Activated CD4-positive, alpha-beta T cell treated with anti-CD3 and anti-CD28 coated beads for 36 hours (primary cell): ENCODE measurements at regions of chr2 and their contacts with region 1.

Region 1: GRCh38 chr2:8408560-8409460 is 273.0 kb upstream of the ID2 start:
- DNase-seq: peak; percentile 88
- ATAC-seq: peak; percentile 97
- H3K4me3 Mint-ChIP-seq: peak overlapping the region; percentile 28
- H3K27ac Mint-ChIP-seq: peak overlapping the region; percentile 84
- H3K4me1 Mint-ChIP-seq: peaks cover 33% of the 10 kb centered on the region
- H3K27me3 Mint-ChIP-seq: peaks cover 10% of the 10 kb centered on the region

Region 2: GRCh38 chr2:7377916-7378569 is 1030.8 kb before region 1 on chr2:
- CTCF ChIA-PET with region 1: no interaction called
- POLR2A ChIA-PET with region 1: no interaction called
- intact Hi-C with region 1: no loop called
- DNase-seq: no peak
- ATAC-seq: no peak
- H3K4me3 Mint-ChIP-seq: no peak overlapping the region
- H3K27ac Mint-ChIP-seq: no peak overlapping the region
- H3K4me1 Mint-ChIP-seq: no peaks in the 10 kb centered on the region
- H3K27me3 Mint-ChIP-seq: peaks cover 8% of the 10 kb centered on the region

Region 3: GRCh38 chr2:7467782-7468447 is 940.9 kb before region 1 on chr2:
- CTCF ChIA-PET with region 1: no interaction called
- POLR2A ChIA-PET with region 1: no interaction called
- intact Hi-C with region 1: loop called in 1 of 2 experiments (anchors 1 kb)
- DNase-seq: peak; percentile 69
- ATAC-seq: peak; percentile 96
- H3K4me3 Mint-ChIP-seq: peak overlapping the region; percentile 15
- H3K27ac Mint-ChIP-seq: peak overlapping the region; percentile 84
- H3K4me1 Mint-ChIP-seq: peaks cover 45% of the 10 kb centered on the region
- H3K27me3 Mint-ChIP-seq: peaks cover 2% of the 10 kb centered on the region

Region 4: GRCh38 chr2:7845332-7845731 is 563.5 kb before region 1 on chr2:
- CTCF ChIA-PET with region 1: no interaction called
- POLR2A ChIA-PET with region 1: interaction called, 6 read pairs
- intact Hi-C with region 1: loop called in 1 of 2 experiments (anchors 1 kb)
- DNase-seq: no peak
- ATAC-seq: no peak
- H3K4me3 Mint-ChIP-seq: no peak overlapping the region
- H3K27ac Mint-ChIP-seq: no peak overlapping the region
- H3K4me1 Mint-ChIP-seq: peaks cover 40% of the 10 kb centered on the region
- H3K27me3 Mint-ChIP-seq: peaks cover 6% of the 10 kb centered on the region

Region 5: DNA sequence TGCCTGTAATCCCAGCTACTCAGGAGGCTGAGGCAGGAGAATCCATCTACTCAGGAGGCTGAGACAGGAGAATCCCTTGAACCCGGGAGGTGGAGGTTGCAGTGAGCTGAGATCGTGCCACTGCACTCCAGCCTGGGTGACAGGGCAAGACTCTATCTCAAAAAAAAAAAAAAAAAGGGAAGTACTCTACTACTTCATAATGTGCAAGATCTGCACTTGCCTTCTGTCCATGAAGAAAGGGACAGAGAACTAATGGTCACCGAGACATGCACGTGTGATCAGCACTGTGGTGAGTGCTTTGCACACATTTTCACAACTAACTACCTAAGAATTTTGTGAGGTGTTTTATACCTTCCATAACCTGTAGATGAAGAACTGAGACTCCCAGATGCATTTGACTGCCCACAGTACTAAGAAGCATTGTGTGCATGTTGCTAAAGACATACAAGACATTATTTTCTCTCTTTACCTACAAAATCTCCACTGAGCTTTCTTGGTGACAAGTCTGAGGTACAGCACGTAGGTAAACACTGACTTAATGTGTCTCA is 511.8 kb before region 1 on chr2:
- CTCF ChIA-PET with region 1: no interaction called
- POLR2A ChIA-PET with region 1: no interaction called
- intact Hi-C with region 1: no loop called
- DNase-seq: no peak
- ATAC-seq: no peak
- H3K4me3 Mint-ChIP-seq: no peak overlapping the region
- H3K27ac Mint-ChIP-seq: no peak overlapping the region
- H3K4me1 Mint-ChIP-seq: peaks cover 18% of the 10 kb centered on the region
- H3K27me3 Mint-ChIP-seq: peaks cover 3% of the 10 kb centered on the region

Region 6: DNA sequence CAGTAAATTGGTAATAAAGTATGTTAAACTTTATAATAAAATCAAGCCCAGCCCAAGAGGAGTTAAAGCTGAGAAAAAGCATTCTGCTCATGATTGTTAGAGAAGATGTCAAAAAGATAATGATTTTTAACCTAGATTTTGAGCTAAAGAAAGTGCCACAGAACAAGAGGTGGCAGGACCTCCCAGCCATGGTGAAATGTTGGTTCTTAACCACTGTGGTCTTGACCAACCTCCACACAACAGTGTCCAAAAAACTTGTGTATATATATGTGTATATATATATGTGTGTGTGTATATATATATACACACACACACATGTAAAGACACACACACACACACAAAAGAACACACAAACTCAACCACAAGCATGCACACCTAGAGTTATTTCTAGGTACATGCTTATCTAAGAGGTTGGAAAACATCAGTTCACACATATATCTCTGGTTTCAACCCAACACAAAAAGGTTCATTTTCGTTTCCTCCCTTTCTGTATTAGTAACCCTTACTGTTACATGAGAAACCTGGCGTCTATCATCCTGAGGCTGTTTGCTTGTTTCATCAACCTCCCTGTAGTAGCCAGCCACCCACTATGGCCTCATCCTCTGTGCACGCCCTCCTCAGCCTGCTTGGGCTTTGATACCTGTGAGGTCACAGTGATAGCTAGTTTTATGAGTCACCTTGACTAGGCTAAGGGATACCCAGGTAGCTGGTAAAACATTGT is 358.8 kb before region 1 on chr2:
- CTCF ChIA-PET with region 1: no interaction called
- POLR2A ChIA-PET with region 1: interaction called, 6 read pairs
- intact Hi-C with region 1: loop called in 1 of 2 experiments (anchors 2 kb)
- DNase-seq: peak; percentile 87
- ATAC-seq: peak; percentile 97
- H3K4me3 Mint-ChIP-seq: peak overlapping the region; percentile 30
- H3K27ac Mint-ChIP-seq: peak overlapping the region; percentile 88
- H3K4me1 Mint-ChIP-seq: peaks cover 34% of the 10 kb centered on the region
- H3K27me3 Mint-ChIP-seq: peaks cover 5% of the 10 kb centered on the region

Region 7: GRCh38 chr2:8246137-8246536 is 162.7 kb before region 1 on chr2:
- CTCF ChIA-PET with region 1: no interaction called
- POLR2A ChIA-PET with region 1: no interaction called
- intact Hi-C with region 1: no loop called
- DNase-seq: no peak
- ATAC-seq: no peak
- H3K4me3 Mint-ChIP-seq: no peak overlapping the region
- H3K27ac Mint-ChIP-seq: no peak overlapping the region
- H3K4me1 Mint-ChIP-seq: peaks cover 9% of the 10 kb centered on the region
- H3K27me3 Mint-ChIP-seq: peaks cover 4% of the 10 kb centered on the region

Region 8: GRCh38 chr2:8357738-8358518 is 50.9 kb before region 1 on chr2:
- CTCF ChIA-PET with region 1: no interaction called
- POLR2A ChIA-PET with region 1: no interaction called
- intact Hi-C with region 1: no loop called
- DNase-seq: no peak
- ATAC-seq: no peak
- H3K4me3 Mint-ChIP-seq: no peak overlapping the region
- H3K27ac Mint-ChIP-seq: no peak overlapping the region
- H3K4me1 Mint-ChIP-seq: no peaks in the 10 kb centered on the region
- H3K27me3 Mint-ChIP-seq: peaks cover 3% of the 10 kb centered on the region

Region 9: GRCh38 chr2:8378016-8378810 is 30.6 kb before region 1 on chr2:
- CTCF ChIA-PET with region 1: no interaction called
- POLR2A ChIA-PET with region 1: interaction called, 8 read pairs
- intact Hi-C with region 1: loop called in 1 of 2 experiments (anchors 2 kb)
- DNase-seq: peak; percentile 27
- ATAC-seq: peak; percentile 79
- H3K4me3 Mint-ChIP-seq: no peak overlapping the region
- H3K27ac Mint-ChIP-seq: peak overlapping the region; percentile 68
- H3K4me1 Mint-ChIP-seq: peaks cover 33% of the 10 kb centered on the region
- H3K27me3 Mint-ChIP-seq: peaks cover 4% of the 10 kb centered on the region

Region 10: GRCh38 chr2:8488001-8488738 is 79.4 kb after region 1 on chr2:
- CTCF ChIA-PET with region 1: no interaction called
- POLR2A ChIA-PET with region 1: interaction called, 6 read pairs
- intact Hi-C with region 1: loop called (anchors 1 kb)
- DNase-seq: peak; percentile 80
- ATAC-seq: peak; percentile 85
- H3K4me3 Mint-ChIP-seq: peak overlapping the region; percentile 72
- H3K27ac Mint-ChIP-seq: peak overlapping the region; percentile 86
- H3K4me1 Mint-ChIP-seq: peaks cover 49% of the 10 kb centered on the region
- H3K27me3 Mint-ChIP-seq: no peaks in the 10 kb centered on the region

Region 11: GRCh38 chr2:8803658-8804379 is 395.0 kb after region 1 on chr2:
- CTCF ChIA-PET with region 1: no interaction called
- POLR2A ChIA-PET with region 1: no interaction called
- intact Hi-C with region 1: loop called in 1 of 2 experiments (anchors 5 kb)
- DNase-seq: peak; percentile 77
- ATAC-seq: peak; percentile 98
- H3K4me3 Mint-ChIP-seq: no peak overlapping the region
- H3K27ac Mint-ChIP-seq: peak overlapping the region; percentile 82
- H3K4me1 Mint-ChIP-seq: peaks cover 27% of the 10 kb centered on the region
- H3K27me3 Mint-ChIP-seq: no peaks in the 10 kb centered on the region